Panc1 (cell line): ENCODE measurements at regions of chr13 and their contacts with region 1.

Region 1: GRCh38 chr13:51286135-51287002 is 53.1 kb upstream of the SERPINE3 start:
- DNase-seq: peak; percentile 47
- ATAC-seq: peak; percentile 97
- H3K4me3 ChIP-seq: no peak overlapping the region
- H3K27ac ChIP-seq: no peak overlapping the region
- H3K4me1 ChIP-seq: no peaks in the 10 kb centered on the region
- H3K27me3 ChIP-seq: no peaks in the 10 kb centered on the region
- CTCF ChIP-seq: peak; percentile 90

Region 2: GRCh38 chr13:51125498-51126226 is 160.7 kb before region 1 on chr13:
- CTCF ChIA-PET with region 1: interaction called, 14 read pairs
- POLR2A ChIA-PET with region 1: no interaction called
- in situ Hi-C with region 1: no loop called
- intact Hi-C with region 1: loop called (anchors 2 kb)
- DNase-seq: peak; percentile 36
- ATAC-seq: peak; percentile 84
- H3K4me3 ChIP-seq: no peak overlapping the region
- H3K27ac ChIP-seq: no peak overlapping the region
- H3K4me1 ChIP-seq: no peaks in the 10 kb centered on the region
- H3K27me3 ChIP-seq: peaks cover 4% of the 10 kb centered on the region
- CTCF ChIP-seq: peak; percentile 79